Lower leg skin (tissue), 4 donors: ENCODE measurements at regions of chr9 and their contacts with region 1.

Region 1: DNA sequence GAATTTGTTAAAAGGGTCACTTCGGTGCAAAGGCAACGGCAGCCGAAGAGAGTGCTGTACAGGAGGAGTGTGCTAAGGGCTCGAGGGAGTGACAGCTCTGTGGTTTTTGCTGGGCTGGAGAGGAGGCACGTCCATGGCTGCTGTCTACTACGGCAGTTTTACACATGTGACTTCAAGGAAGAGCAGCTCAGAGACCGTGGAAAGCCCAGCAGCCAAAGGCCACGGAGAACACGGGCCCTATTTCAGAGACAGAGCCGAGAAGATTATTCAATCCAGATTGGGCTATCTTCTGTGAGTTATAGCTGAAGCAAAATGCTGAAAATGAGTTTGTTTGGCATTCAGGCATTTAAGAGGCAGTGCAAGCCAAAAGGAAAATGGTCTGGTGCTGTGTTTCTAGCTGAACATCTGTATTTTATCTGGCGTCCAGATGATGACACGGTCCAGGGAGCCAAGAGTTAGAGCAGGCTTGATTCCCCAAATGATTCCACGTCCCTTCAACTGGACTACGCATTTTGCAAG is 96.4 kb downstream of the RFK start:
- DNase-seq: peak in 1 of 2 donors; percentile 62
- H3K4me3 ChIP-seq: no peak overlapping the region
- CTCF ChIP-seq: no peak
- POLR2A ChIP-seq: no peak

Region 2: GRCh38 chr9:75197561-75197960 is 1100.2 kb before region 1 on chr9:
- intact Hi-C with region 1: loop called (anchors 10 kb)
- DNase-seq: no peak
- H3K4me3 ChIP-seq: no peak overlapping the region
- CTCF ChIP-seq: no peak
- POLR2A ChIP-seq: no peak

Region 3: DNA sequence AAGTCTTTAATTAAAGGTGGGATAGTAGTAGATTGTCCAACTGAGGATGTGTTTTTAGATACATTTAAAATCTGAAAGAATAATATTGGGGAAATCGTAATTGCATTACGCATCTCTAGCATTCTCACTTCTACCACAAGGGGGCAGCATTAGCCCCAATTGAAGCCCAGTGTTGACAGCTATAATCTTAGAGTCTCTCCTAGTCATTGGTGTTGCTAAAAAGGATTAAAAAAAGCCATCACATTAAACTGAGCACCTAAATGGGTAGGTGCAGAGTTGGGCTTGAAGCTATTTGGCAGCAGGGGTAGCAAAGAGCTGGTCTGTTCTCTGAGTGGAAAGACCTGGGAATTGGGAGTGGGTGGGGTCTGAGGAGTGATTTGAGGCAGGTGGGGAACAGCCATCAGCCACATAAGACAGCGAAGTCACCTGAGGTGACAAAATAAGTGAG is 1032.2 kb before region 1 on chr9:
- intact Hi-C with region 1: loop called (anchors 10 kb)
- DNase-seq: peak in 1 of 2 donors; percentile 23
- H3K4me3 ChIP-seq: no peak overlapping the region
- CTCF ChIP-seq: no peak
- POLR2A ChIP-seq: no peak